WTC11 (cell line): ENCODE measurements at regions of chr22 and their contacts with region 1.

Region 1: DNA sequence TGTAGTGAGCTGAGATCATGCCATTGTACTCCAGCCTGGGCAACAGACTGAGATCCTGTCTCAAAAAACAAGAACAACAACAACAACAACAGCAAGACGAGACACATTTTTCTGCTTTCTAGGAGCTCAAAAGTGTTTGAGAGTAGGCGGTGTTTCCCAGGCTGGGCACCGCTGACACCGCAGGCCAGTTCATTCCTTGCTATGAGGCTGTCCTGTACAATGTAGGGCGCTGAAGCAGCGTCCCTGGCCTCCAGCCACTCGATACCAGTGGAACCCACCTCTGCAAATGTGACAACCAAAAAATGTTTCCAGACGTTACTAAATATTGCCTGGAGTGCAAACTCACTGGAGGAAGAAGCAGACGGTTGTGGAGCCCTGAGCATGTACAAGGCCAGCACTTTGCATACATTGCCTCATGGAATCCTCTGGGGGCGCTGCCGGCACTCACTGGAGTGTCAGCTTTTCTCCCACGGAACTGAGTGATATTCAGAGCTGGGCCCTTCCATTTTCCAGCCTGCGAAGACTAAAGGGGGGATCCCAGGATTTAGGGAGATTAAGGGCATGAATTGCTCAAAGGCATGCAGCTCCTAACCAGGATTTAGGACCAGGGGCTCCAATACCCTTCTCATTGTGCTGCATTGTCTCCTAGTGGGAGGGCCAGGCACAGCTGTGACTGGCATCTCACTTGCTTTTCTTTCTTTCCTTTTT is 5.8 kb upstream of the MIEF1 start:
- DNase-seq: peak; percentile 75
- ATAC-seq: peak; percentile 78
- H3K4me3 Mint-ChIP-seq: no peak overlapping the region
- H3K27ac Mint-ChIP-seq: no peak overlapping the region
- H3K4me1 Mint-ChIP-seq: peaks cover 2% of the 10 kb centered on the region
- H3K27me3 Mint-ChIP-seq: peaks cover 67% of the 10 kb centered on the region
- CTCF ChIP-seq: peak; percentile 70

Region 2: DNA sequence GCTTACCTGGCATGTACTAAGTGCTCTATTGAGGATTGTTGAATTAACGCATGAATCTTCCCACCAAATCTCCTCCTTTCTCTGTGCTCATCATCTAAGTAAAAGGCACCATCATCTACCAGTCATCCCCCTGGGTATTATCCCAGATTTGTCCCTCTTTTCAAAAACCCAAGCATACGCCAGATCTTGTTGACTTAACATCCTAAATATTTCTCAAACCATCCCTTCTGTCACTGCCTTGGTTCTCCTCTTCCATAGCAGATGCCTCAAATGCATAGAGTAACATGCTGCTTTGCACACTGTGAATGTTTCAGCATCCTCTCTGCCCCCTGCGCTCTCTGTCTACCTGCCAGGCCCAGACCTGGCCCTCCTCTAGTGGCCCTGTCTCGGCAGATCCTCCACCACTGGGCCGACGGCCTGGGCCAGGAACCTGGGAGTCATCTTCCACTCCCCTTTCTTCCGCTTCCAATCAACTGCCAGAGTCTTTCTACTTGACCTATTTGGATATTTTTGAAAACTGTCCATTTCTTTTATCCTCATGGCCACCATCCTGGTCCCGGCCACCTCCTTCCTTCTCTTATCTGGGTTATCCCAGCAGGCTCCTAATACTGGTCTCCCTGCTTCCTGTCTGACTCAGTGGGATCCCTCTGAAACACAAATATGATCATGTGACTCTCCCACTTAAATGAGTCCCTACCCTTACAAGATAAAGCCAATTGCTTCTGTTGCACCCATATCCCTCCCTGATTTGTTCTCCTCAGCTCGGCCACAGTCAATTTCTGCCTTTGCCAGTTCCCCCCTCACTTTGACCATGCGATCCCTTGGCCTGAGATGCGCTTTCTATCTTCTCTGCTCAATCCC is 100.1 kb before region 1 on chr22:
- CTCF ChIA-PET with region 1: interaction called, 12 read pairs
- POLR2A ChIA-PET with region 1: no interaction called
- DNase-seq: no peak
- ATAC-seq: no peak
- H3K4me3 Mint-ChIP-seq: no peak overlapping the region
- H3K27ac Mint-ChIP-seq: no peak overlapping the region
- H3K4me1 Mint-ChIP-seq: peaks cover 7% of the 10 kb centered on the region
- H3K27me3 Mint-ChIP-seq: peaks cover 2% of the 10 kb centered on the region; the same call in 1 of the 2 replicates
- CTCF ChIP-seq: no peak

Region 3: GRCh38 chr22:39454385-39454871 is 41.9 kb before region 1 on chr22:
- CTCF ChIA-PET with region 1: interaction called, 11 read pairs
- POLR2A ChIA-PET with region 1: no interaction called
- DNase-seq: no peak
- ATAC-seq: peak; percentile 16
- H3K4me3 Mint-ChIP-seq: peak overlapping the region; percentile 17; the same call in 1 of the 2 replicates
- H3K27ac Mint-ChIP-seq: no peak overlapping the region; the same call in 1 of the 2 replicates
- H3K4me1 Mint-ChIP-seq: peaks cover 39% of the 10 kb centered on the region
- H3K27me3 Mint-ChIP-seq: peaks cover 47% of the 10 kb centered on the region
- CTCF ChIP-seq: no peak

Region 4: DNA sequence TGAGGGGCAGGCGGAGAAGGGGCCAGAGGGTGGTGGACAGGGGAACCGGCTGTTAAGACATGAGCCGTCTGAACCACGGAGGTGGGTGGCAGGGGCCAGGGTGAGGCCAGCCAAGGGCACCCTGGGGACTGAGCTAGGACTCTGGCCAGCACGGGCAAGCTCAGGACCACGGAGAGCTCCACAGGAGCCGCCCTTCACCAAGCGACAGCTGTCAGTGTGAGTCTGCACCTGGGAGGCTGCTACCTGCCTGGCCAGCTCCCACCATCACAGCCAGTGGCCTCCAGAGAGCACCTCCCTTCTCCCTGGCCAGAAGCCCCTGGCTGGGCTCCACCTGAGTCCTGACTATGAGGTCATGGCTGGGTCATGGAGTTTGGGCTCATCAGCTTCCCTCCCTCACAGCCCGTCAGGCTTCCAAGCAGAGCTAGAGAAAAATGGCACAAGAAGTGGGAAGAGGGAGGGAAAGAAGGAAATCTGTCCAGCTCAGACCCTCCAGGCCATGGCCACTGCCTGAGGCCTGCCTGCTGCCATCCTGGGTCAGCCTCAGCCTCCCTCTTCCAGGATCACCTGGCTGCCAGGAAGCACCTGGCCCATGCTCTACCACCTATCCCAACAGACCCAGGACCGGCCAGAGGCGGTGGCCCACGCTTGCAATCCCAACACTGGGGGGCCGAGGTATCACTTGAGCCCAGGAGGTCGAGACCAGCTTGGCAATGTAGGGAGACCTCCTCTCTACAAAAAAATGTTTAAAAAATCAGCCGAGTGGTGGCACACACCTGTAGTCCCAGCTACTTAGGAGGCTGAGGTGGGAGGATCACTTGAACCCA is 17.6 kb before region 1 on chr22:
- CTCF ChIA-PET with region 1: interaction called, 14 read pairs
- POLR2A ChIA-PET with region 1: no interaction called
- DNase-seq: peak; percentile 70
- ATAC-seq: peak; percentile 39
- H3K4me3 Mint-ChIP-seq: no peak overlapping the region
- H3K27ac Mint-ChIP-seq: no peak overlapping the region
- H3K4me1 Mint-ChIP-seq: peaks cover 23% of the 10 kb centered on the region
- H3K27me3 Mint-ChIP-seq: no peaks in the 10 kb centered on the region
- CTCF ChIP-seq: no peak

Region 5: GRCh38 chr22:39520054-39520891 is 24.0 kb after region 1 on chr22 and contains the start of gene ATF4:
- CTCF ChIA-PET with region 1: interaction called, 41 read pairs
- POLR2A ChIA-PET with region 1: interaction called, 16 read pairs
- DNase-seq: peak; percentile 97
- ATAC-seq: peak; percentile 89
- H3K4me3 Mint-ChIP-seq: peak within 1 kb of the TSS; percentile 95
- H3K27ac Mint-ChIP-seq: peak within 1 kb of the TSS; percentile 100
- H3K4me1 Mint-ChIP-seq: peaks cover 38% of the 10 kb centered on the region
- H3K27me3 Mint-ChIP-seq: peaks cover 31% of the 10 kb centered on the region
- CTCF ChIP-seq: no peak
- total RNA-seq, gene ATF4: 361 to 460 TPM (median 371 TPM) in 3 replicates

Region 6: DNA sequence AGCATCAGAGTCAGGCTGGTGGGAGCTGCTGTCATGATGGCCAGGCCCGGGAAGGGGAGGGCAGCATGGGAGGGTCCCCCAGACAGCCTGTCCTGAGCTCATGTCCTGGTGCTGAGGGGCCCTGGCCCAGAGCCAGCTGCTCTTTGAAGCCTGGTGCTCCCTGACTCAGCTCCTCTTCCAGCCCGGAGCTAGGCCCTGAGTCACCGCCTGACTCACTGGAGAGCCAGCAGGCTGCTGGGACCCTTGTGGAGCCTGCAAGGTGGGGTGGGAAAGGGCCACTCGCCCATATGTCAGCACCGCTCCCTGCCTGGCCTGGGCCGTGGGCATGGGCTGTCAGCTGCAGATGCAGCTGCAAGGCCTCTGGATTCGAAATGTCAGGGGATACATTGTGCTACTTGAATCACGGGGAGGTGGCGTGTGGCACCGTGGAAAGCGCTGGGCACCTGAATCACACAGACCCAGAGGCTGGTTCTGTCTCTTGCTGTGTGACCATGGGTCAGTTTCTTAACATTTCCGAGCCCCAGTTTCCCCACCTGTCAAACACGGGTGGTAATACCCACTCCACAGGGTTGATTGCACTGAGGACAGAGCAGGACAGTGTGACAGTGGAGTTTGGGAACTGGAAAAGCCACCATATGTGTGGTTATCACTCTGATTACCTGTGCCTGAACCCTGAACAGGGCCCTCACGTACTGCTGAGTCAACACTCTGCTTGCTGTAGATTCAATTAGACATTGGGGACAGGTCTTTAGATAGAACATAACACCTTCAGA is 78.7 kb after region 1 on chr22:
- CTCF ChIA-PET with region 1: no interaction called
- POLR2A ChIA-PET with region 1: no interaction called
- DNase-seq: no peak
- ATAC-seq: no peak
- H3K4me3 Mint-ChIP-seq: no peak overlapping the region
- H3K27ac Mint-ChIP-seq: 0 out of 2 replicates have a peak overlapping the region, but pooled peaks have one; percentile 49
- H3K4me1 Mint-ChIP-seq: peaks cover 7% of the 10 kb centered on the region
- H3K27me3 Mint-ChIP-seq: no peaks in the 10 kb centered on the region
- CTCF ChIP-seq: no peak